Adrenal gland (tissue), 19 donors: ENCODE measurements at regions of chr19 and their contacts with region 1.

Region 1: DNA sequence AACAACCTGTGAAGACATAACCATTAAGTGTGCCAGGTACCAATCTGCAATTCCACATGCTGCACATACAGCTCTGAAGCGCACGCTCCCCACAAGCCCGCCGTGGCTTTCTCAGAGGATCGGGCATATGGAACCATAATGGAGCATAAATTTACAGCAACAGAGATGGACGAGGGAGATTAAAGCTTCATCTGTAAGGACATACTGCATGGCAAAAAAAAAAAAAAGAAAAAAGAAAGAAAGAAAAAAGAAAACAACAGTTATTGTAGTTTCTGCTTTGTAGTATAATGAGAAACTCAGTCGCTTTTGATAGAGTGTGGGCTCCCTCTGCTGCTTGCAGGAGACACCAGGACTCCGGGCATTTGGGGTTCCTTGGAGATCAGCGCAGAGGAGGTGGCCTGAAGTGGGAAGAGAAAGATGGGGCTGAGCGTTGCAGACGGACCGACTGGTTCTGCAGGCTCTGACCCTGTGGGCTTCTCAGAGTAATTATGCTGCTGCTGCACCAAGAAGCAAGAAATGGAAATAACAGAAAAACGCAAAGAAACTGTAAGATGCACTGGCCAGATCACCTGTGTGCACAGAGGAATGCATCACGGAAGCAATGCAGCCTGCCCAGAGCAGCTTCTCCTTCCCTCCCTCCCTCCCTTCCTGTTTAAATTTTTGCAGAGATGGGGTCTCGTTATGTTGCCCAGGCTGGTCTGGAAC is 10.8 kb upstream of the PDCD5 start:
- DNase-seq: peak; percentile 50 to 87 (median 62)
- H3K4me3 ChIP-seq: no peak overlapping the region
- H3K27ac ChIP-seq: no peak overlapping the region
- H3K4me1 ChIP-seq: no peaks in the 10 kb centered on the region
- H3K27me3 ChIP-seq: no peaks in the 10 kb centered on the region
- CTCF ChIP-seq: peak; percentile 38 to 91 (median 70)
- POLR2A ChIP-seq: no peak

Region 2: GRCh38 chr19:32287811-32288227 is 282.4 kb before region 1 on chr19:
- intact Hi-C with region 1: loop called in 1 of 2 experiments (anchors 5 kb)
- DNase-seq: peak; percentile 44 to 83 (median 60)
- H3K4me3 ChIP-seq: no peak overlapping the region
- H3K27ac ChIP-seq: no peak overlapping the region
- H3K4me1 ChIP-seq: no peaks in the 10 kb centered on the region
- H3K27me3 ChIP-seq: peaks cover 6% of the 10 kb centered on the region
- CTCF ChIP-seq: peak; percentile 12 to 50 (median 45)
- POLR2A ChIP-seq: no peak

Region 3: GRCh38 chr19:32339988-32340874 is 230.0 kb before region 1 on chr19:
- intact Hi-C with region 1: loop called in 1 of 2 experiments (anchors 5 kb)
- DNase-seq: peak; percentile 75 to 92 (median 82)
- H3K4me3 ChIP-seq: no peak overlapping the region
- H3K27ac ChIP-seq: no peak overlapping the region
- H3K4me1 ChIP-seq: no peaks in the 10 kb centered on the region
- H3K27me3 ChIP-seq: no peaks in the 10 kb centered on the region
- CTCF ChIP-seq: peak; percentile 37 to 74 (median 72)
- POLR2A ChIP-seq: no peak

Region 4: DNA sequence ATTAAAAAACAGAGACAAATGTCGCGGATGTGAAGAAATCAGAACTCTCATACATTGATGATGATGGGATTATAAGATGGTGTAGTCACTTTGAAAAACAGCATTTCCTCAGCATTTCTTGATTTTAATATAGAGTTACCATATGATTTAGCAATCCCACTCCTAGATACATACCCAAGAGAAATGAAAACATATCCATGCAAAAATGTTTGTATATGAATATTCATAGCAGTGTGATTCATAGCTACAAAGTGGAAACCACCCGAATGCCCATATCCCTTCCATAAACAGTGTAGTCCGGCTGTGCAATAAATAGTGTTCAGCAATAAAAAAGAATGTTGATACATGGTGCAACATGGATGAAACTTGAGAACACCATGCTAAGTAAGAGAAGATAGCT is 120.0 kb before region 1 on chr19:
- intact Hi-C with region 1: no loop called
- DNase-seq: no peak
- H3K4me3 ChIP-seq: no peak overlapping the region
- H3K27ac ChIP-seq: no peak overlapping the region
- H3K4me1 ChIP-seq: no peaks in the 10 kb centered on the region
- H3K27me3 ChIP-seq: no peaks in the 10 kb centered on the region
- CTCF ChIP-seq: no peak
- POLR2A ChIP-seq: no peak

Region 5: DNA sequence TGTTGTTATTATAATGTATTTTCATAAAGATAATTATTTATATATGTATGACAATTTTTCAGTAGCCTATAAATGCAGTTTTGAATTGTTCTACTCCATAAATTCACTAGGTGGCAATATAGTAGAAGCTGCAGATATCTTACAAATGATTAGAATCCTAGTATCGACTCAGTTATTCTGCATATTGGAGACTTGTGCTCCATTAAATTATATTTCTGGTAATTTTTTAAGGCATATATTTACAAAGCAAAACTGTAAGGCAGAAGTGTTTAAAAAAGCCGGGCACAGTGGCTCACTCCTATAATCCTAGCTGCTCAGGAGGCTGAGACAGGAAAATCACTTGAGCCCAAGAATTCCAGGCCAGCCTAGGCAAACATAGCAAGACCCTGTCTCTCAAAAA is 106.0 kb before region 1 on chr19:
- intact Hi-C with region 1: loop called in 1 of 2 experiments (anchors 10 kb)
- DNase-seq: no peak
- H3K4me3 ChIP-seq: no peak overlapping the region
- H3K27ac ChIP-seq: no peak overlapping the region
- H3K4me1 ChIP-seq: no peaks in the 10 kb centered on the region
- H3K27me3 ChIP-seq: no peaks in the 10 kb centered on the region
- CTCF ChIP-seq: peak in 5 of 6 experiments; percentile 18 to 55 (median 33)
- POLR2A ChIP-seq: no peak